Posterior cingulate gyrus (tissue), 11 donors: ENCODE measurements at regions of chr2 and their contacts with region 1.

Region 1: DNA sequence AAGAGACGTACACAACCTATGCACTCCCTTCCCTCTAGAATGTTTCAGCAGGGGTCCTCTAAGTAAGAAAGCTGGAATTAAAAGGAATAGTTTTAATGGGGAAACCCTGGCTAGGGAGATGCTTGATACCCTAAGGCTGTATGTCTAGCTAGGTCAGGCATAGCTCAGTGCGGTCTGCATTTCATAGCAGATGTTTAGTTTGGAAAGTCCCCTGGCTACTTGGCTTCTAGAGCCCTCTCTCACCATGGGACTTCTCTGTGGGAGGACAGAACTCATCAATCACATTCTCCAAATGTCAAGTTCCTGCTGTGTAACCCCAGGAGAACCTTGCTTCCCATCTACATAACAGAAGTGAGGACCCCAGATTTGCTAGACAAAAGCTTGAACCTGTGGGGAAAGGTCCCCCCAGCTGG is 24.1 kb upstream of the ANXA4 start:
- DNase-seq: no peak

Region 2: DNA sequence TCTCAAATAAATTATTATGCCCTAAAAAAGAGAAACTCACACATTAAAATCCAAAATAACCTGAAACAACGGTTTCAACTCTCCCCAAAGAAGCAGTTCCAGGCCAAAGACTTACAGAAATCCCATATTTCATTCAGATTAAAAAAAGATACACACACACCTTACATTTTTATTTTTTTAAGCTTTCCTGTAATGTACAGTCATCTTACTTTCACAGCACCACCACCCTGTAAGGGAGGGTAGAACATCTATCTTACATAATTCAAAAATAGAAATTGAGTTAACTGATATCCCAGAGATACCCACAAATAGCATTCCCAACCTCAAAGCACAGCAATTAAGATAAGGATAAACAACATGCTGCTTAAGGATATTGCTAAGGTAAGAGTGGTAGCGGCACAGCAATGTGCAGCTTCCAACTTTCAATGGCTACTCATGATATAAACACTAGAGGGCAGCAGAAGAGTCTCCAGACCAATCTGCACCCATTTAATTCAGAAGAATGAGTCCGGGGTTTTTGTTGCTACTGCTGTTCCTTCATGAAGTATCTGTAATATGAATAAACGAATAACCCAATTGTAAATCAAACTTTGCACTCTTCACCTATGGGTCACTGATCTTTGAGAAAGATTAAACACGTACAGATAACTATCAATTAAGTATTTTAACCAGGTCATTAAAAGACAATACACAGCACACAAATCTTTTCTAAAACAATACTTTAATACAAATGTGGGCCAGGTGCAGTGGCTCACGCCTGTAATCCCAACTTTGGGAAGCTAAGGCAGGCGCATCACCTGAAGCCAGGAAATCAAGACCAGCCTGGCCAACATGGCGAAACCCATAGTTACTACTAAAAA is 342.1 kb before region 1 on chr2:
- intact Hi-C with region 1: loop called (anchors 1 kb)
- DNase-seq: no peak

Region 3: GRCh38 chr2:69453475-69454129 is 264.3 kb before region 1 on chr2:
- intact Hi-C with region 1: loop called (anchors 10 kb)
- DNase-seq: no peak

Region 4: DNA sequence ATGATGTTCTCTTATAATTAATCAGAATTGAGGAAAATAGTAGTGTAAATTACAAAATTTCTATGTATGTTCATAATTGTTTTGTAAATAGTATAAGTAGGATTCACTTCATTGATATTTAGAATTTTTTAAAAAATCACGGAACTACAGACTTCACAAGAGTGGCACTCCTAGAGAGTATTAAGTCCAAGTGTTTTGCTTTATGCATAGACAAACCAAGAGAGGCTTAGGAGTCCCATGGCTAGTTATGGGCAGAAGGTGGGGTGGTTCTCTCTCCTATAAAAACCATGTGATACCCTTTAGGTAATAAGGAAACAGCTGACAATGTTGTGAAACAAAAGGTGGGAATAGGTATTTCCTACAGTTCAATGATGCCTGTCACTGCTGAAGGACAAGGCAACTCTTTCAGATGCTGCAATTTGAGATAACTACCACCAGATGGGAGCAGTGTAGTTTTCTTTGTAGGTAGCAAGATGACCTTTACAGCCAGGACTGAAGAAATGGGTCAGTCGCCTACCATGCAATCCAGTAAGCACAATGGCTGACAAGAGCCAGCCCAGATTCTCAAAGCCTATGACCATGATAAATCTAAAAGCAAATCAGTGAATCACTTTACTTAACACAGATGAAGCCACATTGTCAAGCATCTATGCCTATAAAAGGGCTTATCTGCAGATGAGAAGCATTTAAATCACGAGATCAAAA is 158.3 kb before region 1 on chr2:
- intact Hi-C with region 1: loop called (anchors 2 kb)
- DNase-seq: no peak

Region 5: DNA sequence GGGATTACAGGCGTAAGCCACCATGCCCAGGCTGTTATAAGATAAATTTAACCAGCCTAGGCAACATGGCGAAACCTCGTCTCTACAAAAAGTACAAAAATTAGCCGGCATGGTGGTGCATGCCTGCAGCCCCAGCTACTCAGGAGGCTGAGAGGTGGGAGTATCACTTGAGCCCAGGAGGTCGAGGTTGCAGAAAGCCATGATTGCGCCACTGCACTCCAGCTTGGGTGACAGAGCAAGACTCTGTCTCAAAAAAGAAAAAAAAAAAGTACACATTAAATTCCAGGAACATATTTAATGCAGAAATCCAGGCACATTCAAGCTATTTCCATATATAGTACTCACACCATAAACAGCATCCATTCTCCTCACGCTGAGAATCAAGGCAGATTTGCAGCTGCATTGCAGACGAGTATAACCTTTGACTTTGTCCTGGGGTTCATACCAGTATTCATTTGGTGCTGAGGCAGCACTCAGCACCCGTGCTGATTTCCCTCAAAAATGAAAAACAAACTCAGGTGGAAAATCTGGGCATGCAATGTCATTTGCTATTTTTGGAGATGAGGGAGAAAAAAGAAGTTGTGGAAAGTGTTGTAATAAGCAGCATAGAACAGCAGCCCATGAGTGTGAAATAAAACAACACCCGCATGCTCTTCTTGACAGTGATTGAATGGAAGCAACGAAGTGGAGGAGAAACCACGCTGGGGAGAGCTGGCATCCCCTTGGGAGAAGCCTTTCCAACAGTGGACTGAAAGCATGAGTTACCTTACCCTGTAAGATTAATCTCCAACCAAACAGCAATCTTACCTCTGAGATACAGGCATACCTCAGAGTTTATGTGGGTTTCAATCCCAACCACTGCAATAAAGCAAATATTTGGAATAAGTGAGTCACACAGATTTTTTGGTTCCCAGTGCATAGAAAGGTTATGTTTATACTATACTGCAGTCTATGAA is 22.7 kb before region 1 on chr2:
- intact Hi-C with region 1: no loop called
- DNase-seq: no peak